Body of pancreas (tissue), 4 donors: ENCODE measurements at regions of chr9 and their contacts with region 1.

Region 1: GRCh38 chr9:137021979-137022619 is 5.9 kb downstream of the ABCA2 start:
- DNase-seq: peak; percentile 35 to 50 (median 43)
- ATAC-seq: no peak
- H3K4me3 ChIP-seq: no peak overlapping the region
- H3K27ac ChIP-seq: no peak overlapping the region
- H3K4me1 ChIP-seq: peaks cover 21% of the 10 kb centered on the region
- H3K27me3 ChIP-seq: no peaks in the 10 kb centered on the region
- CTCF ChIP-seq: no peak
- POLR2A ChIP-seq: no peak

Region 2: DNA sequence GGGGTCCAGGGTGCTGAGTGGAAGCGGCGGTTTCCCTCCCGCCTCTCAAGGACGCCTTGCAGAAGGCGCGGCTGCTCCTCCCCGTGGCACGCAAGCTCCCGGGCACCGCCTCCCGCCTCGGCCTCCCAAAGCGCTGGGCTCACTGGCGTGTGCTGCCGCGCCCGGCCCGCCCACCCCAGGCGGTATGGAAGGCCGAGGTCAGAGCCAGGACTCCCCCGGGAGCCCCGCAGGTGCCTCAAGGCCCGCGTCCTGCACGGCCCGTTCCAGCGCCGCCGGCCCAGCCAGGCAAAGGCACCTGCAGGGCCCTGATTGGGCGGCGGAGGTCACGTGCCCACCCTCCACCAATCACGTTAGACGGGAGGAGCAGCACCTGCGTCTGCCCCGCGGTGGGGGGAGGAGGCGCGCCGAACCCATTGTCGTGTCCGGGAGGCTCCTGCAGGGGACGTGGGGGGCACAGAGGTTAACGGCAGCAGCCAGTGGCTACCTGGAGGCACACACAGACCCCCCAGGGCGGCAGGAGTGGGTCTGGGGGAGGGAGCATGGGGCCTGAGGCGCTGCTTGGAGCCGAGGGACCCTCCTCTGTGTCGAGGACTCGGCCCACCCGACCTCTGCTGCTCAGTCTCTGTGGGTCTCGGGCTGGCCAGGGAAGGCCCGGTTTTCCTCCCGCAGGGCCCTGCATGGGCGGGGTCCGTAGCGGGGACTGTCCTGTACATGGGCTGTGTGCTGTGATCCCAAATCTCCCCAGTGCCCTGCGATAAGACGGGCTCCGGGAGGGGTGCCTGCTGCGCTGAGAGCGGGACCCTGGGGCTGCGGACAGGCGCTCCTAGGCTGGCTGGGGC is 72.1 kb before region 1 on chr9:
- intact Hi-C with region 1: loop called (anchors 5 kb)
- DNase-seq: peak; percentile 97
- ATAC-seq: peak; percentile 93
- H3K4me3 ChIP-seq: peak overlapping the region in 1 of 2 donors; percentile 37
- H3K27ac ChIP-seq: peak overlapping the region; percentile 87 to 92 (median 92)
- H3K4me1 ChIP-seq: peaks cover 48% of the 10 kb centered on the region
- H3K27me3 ChIP-seq: no peaks in the 10 kb centered on the region
- CTCF ChIP-seq: peak in 4 of 7 experiments; percentile 29 to 63 (median 44)
- POLR2A ChIP-seq: peak; percentile 68 to 81 (median 80)